Activated CD8-positive, alpha-beta T cell treated with anti-CD3 and anti-CD28 coated beads for 36 hours (primary cell): ENCODE measurements at regions of chr9 and their contacts with region 1.

Region 1: GRCh38 chr9:38088006-38088925 is 19.2 kb upstream of the SHB start:
- DNase-seq: peak; percentile 80
- ATAC-seq: peak; percentile 77
- H3K4me3 Mint-ChIP-seq: no peak overlapping the region
- H3K27ac Mint-ChIP-seq: no peak overlapping the region
- H3K4me1 Mint-ChIP-seq: no peaks in the 10 kb centered on the region
- H3K27me3 Mint-ChIP-seq: peaks cover 5% of the 10 kb centered on the region
- CTCF ChIP-seq: peak; percentile 93

Region 2: DNA sequence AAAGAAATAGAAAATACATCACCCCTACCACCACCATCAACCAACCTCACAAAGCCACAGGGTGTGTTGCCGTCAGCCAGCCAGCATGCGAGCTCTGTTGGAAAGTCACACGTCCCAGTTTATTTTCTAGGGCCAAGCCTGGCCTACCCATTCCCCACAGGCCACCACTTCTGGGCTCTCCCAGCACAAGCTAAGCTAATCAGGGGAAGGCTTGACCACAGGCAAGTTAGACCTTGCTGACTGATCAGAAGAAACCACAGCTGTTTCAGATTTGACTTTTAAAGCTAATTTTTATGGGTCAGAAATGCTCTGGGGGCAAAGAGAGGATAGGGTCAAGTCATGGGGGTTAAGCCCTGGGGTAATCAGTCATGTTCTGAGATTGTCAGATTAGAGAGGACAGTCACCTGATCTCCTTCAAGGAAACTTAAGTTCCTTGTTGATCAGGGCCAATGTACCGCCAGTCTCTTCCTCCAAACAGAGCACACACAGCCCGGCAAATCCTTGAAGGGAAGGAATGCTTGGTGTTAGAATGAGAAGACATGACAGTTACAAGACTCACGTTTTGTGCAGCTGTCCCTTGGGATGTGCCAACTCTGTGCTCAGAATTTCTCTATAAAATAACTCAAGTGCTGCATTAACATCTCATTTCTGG is 26.8 kb before region 1 on chr9:
- CTCF ChIA-PET with region 1: interaction called, 28 read pairs
- POLR2A ChIA-PET with region 1: no interaction called
- intact Hi-C with region 1: no loop called
- DNase-seq: no peak
- ATAC-seq: no peak
- H3K4me3 Mint-ChIP-seq: no peak overlapping the region
- H3K27ac Mint-ChIP-seq: no peak overlapping the region
- H3K4me1 Mint-ChIP-seq: peaks cover 13% of the 10 kb centered on the region
- H3K27me3 Mint-ChIP-seq: no peaks in the 10 kb centered on the region
- CTCF ChIP-seq: no peak

Region 3: DNA sequence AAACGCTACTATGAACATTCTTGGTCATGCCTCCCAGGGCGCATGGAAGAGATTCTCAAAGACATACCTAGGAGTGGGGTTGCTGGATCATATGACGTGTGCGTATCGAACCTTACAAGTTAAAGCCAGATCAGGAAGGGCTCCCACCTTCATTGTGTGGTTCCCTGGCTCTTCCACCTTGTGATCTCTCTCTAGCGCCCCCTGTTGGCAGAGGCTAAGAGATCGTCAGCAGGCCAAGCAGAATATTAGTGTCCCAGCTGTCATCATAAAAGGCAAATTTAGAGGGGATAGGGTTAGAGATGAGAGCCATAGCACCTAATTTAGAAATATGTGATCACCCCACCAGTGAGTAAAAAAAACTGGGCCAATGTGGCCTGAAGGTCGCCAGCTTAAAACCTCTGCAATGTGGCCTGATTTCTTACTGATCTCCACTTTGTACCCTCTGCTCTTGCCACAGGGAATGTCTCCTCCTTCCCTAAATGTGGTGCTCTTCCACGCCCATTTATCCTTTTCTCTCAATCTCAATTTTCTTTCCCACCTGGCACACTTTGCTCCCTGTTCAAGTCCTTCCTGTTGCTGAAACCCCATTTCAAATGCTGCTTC is 72.4 kb after region 1 on chr9:
- CTCF ChIA-PET with region 1: interaction called, 21 read pairs
- POLR2A ChIA-PET with region 1: no interaction called
- intact Hi-C with region 1: loop called (anchors 10 kb)
- DNase-seq: peak; percentile 78
- ATAC-seq: peak; percentile 56
- H3K4me3 Mint-ChIP-seq: no peak overlapping the region
- H3K27ac Mint-ChIP-seq: no peak overlapping the region
- H3K4me1 Mint-ChIP-seq: peaks cover 2% of the 10 kb centered on the region
- H3K27me3 Mint-ChIP-seq: no peaks in the 10 kb centered on the region
- CTCF ChIP-seq: peak; percentile 93

Region 4: GRCh38 chr9:38362852-38363593 is 274.8 kb after region 1 on chr9:
- CTCF ChIA-PET with region 1: no interaction called
- POLR2A ChIA-PET with region 1: no interaction called
- intact Hi-C with region 1: loop called (anchors 10 kb)
- DNase-seq: peak; percentile 40
- ATAC-seq: peak; percentile 75
- H3K4me3 Mint-ChIP-seq: peak overlapping the region; percentile 34
- H3K27ac Mint-ChIP-seq: no peak overlapping the region
- H3K4me1 Mint-ChIP-seq: peaks cover 4% of the 10 kb centered on the region
- H3K27me3 Mint-ChIP-seq: peaks cover 4% of the 10 kb centered on the region
- CTCF ChIP-seq: peak; percentile 52